ENCODE measurements at regions of chr6 and their contacts with region 1.

Region 1: GRCh38 chr6:142819603-142820337 is 125.2 kb downstream of the HIVEP2 start:
- DNase-seq: no peak
- H3K4me3 ChIP-seq: peak overlapping the region; percentile 5
- H3K27ac ChIP-seq: peak overlapping the region; percentile 18
- H3K4me1 ChIP-seq: peaks cover 3% of the 10 kb centered on the region
- H3K27me3 ChIP-seq: no peaks in the 10 kb centered on the region
- CTCF ChIP-seq: no peak

Region 2: DNA sequence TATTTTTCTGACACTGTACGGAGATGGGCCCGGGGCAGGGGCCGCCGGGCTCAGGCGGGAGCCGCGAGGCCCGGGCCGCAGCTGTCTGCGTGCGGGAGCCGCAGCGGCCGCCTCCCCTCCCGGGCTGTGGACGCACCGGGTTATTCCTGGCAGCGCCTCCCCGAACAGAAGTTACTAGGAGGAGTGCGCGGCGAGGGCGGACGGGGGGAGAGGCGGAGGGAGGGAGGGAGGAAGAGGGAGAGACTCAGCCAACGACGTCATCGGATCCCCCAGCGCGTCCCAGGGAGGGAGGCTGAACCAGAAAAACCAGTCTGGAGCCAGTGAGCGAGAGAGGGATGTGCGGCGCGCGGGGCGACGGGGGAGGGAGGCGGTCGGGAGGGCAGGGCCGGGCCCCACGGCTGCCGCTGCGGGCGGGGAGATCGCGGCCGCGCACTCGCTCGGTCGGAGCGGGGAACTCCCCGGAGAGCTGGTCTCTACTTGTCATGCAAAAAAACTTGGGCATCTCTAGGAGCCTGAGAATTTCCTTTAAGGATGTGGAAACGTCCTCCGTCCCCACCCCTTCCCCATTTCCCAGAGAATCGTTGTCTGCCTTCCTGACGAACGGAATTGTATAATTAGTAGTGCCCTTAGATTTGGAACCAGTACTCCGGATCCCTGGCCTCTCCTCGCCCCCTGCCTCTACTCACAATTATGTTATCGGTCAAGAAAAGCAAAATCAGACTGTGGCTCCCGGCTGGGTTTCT is 126.6 kb after region 1 on chr6:
- intact Hi-C with region 1: loop called (anchors 10 kb)
- DNase-seq: peak; percentile 99
- H3K4me3 ChIP-seq: peak overlapping the region; percentile 74
- H3K27ac ChIP-seq: peak overlapping the region; percentile 97
- H3K4me1 ChIP-seq: no peaks in the 10 kb centered on the region
- H3K27me3 ChIP-seq: no peaks in the 10 kb centered on the region
- CTCF ChIP-seq: no peak

Measured in colonic mucosa (tissue), 4 donors.